Common myeloid progenitor, CD34-positive (primary cell): ENCODE measurements at regions of chr9 and their contacts with region 1.

Region 1: GRCh38 chr9:127586537-127586936 is 25.5 kb upstream of the STXBP1 start:
- DNase-seq: peak; percentile 63 to 74 (median 67)
- H3K4me3 ChIP-seq: no peak overlapping the region
- H3K27ac ChIP-seq: no peak overlapping the region
- H3K4me1 ChIP-seq: peaks cover 0 to 4% (median 1%) of the 10 kb centered on the region in 4 experiments
- H3K27me3 ChIP-seq: no peaks in the 10 kb centered on the region

Region 2: DNA sequence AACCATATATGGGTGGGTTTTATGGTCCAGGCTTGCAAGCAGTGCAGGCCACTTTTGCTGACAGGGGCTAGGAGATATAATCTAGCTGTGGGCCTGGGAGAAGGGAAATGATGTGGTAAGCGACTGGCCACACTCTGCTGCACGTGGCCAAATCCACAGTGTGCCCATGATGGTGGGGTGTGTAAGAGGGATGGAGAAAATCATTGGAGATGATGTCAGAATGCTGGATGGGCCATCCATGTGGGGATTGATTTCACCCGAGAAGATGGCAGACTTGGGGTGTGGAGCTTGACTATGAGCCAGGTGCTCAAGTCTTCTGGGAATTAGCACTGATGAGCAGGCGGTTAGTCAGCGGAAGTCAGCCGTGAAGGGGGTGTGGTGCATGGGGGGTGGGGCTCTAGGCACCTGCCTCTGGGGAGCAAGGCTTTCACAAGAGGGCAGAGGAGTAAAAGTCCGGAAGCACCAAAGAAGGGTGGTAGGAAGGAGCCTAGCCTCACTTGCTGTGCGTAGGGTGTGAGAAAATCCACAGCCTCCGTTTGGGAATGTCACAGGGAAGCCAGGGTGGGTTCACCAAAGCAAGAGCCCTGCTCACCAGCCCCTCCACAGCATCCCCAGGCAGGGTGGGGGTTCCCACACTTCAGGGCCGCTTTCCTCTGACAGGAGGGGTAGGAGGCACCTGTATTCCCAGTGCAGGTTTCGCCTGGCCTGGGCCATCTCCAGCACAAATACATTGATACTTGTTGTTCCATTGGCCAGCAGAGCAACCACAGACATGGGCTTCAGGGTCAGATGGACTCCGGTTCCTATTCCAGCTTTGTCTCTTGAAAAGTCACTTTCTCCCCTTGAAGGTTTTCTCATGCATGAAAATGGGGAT is 419.6 kb before region 1 on chr9:
- CTCF ChIA-PET with region 1: no interaction called
- POLR2A ChIA-PET with region 1: no interaction called
- DNase-seq: peak in 1 of 3 donors; percentile 11
- H3K4me3 ChIP-seq: no peak overlapping the region
- H3K27ac ChIP-seq: no peak overlapping the region
- H3K4me1 ChIP-seq: peaks cover 0 to 5% (median 0%) of the 10 kb centered on the region in 4 experiments
- H3K27me3 ChIP-seq: peaks cover 0 to 2% (median 0%) of the 10 kb centered on the region in 5 experiments

Region 3: GRCh38 chr9:127503947-127504782 is 82.4 kb before region 1 on chr9:
- CTCF ChIA-PET with region 1: interaction called, 139 read pairs
- POLR2A ChIA-PET with region 1: interaction called, 6 read pairs
- DNase-seq: peak; percentile 81 to 91 (median 87)
- H3K4me3 ChIP-seq: no peak overlapping the region
- H3K27ac ChIP-seq: no peak overlapping the region
- H3K4me1 ChIP-seq: no peaks in the 10 kb centered on the region
- H3K27me3 ChIP-seq: no peaks in the 10 kb centered on the region

Region 4: GRCh38 chr9:127519301-127520166 is 67.0 kb before region 1 on chr9:
- CTCF ChIA-PET with region 1: interaction called, 30 read pairs
- POLR2A ChIA-PET with region 1: no interaction called
- DNase-seq: peak; percentile 87 to 98 (median 98)
- H3K4me3 ChIP-seq: peak overlapping the region in 1 of 7 experiments; percentile 24
- H3K27ac ChIP-seq: no peak overlapping the region
- H3K4me1 ChIP-seq: peaks cover 0 to 15% (median 8%) of the 10 kb centered on the region in 4 experiments
- H3K27me3 ChIP-seq: no peaks in the 10 kb centered on the region

Region 5: GRCh38 chr9:127525401-127526187 is 60.9 kb before region 1 on chr9:
- CTCF ChIA-PET with region 1: interaction called, 30 read pairs
- POLR2A ChIA-PET with region 1: no interaction called
- DNase-seq: peak; percentile 14 to 51 (median 45)
- H3K4me3 ChIP-seq: no peak overlapping the region
- H3K27ac ChIP-seq: no peak overlapping the region
- H3K4me1 ChIP-seq: peaks cover 0 to 7% (median 3%) of the 10 kb centered on the region in 4 experiments
- H3K27me3 ChIP-seq: no peaks in the 10 kb centered on the region

Region 6: DNA sequence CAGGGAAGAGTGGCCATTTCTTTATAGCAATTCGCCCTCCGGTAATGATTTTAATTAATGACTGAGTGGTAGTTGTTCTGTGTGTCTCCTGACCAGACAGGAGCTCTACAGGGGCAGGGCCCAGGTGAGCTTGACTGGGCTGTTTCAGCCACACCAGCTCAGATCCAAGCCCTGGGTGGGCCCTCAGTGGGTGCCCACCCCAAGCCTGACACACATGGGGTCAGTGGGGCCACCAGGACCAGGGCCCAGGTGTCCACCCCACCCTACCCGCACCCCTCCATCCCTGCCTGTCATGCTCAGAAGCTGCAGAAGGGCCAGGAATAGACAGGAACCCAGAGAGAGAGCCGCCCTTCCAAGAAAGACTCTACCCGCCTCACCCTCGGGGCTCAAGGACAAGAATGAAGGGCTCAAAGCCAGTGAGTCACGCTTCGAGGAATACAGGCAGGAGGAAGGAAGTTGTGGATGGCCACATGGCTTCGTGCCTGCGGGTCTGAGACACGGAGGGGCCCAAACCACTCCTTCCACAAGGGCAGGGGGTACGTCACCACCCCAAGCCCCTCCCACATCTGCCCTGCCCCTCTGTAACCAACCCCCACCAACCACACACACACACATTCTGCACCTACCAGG is 30.7 kb before region 1 on chr9:
- CTCF ChIA-PET with region 1: interaction called, 29 read pairs
- POLR2A ChIA-PET with region 1: no interaction called
- DNase-seq: peak; percentile 95 to 98 (median 98)
- H3K4me3 ChIP-seq: peak overlapping the region in 3 of 7 experiments; percentile 26 to 50 (median 37)
- H3K27ac ChIP-seq: peak overlapping the region in 1 of 2 experiments; percentile 70
- H3K4me1 ChIP-seq: peaks cover 8 to 77% (median 44%) of the 10 kb centered on the region in 4 experiments
- H3K27me3 ChIP-seq: no peaks in the 10 kb centered on the region

Region 7: GRCh38 chr9:127644943-127645342 is 58.4 kb after region 1 on chr9:
- CTCF ChIA-PET with region 1: no interaction called
- POLR2A ChIA-PET with region 1: no interaction called
- DNase-seq: no peak
- H3K4me3 ChIP-seq: no peak overlapping the region
- H3K27ac ChIP-seq: no peak overlapping the region
- H3K4me1 ChIP-seq: no peaks in the 10 kb centered on the region
- H3K27me3 ChIP-seq: peaks cover 0 to 4% (median 0%) of the 10 kb centered on the region in 5 experiments

Region 8: DNA sequence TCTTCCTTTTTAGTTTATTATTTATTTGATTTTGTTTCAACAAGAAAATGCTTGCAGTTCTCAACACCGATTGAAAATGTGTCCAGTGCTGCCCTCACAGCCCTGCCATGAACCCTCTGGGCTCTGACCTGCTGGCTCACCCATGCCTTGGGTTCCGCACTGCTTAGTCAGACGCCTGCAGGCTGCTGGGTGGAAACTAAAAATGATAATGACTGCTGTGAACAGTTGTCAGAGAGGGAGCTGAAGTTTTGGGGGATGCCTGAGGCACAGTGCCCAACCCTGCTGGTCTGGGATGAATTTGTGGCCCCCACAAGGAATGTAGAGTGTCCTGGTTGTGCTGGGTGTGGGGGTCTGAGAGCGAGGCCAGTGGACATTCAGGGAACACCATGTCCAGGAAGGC is 98.0 kb after region 1 on chr9:
- CTCF ChIA-PET with region 1: no interaction called
- POLR2A ChIA-PET with region 1: no interaction called
- DNase-seq: no peak
- H3K4me3 ChIP-seq: no peak overlapping the region
- H3K27ac ChIP-seq: no peak overlapping the region
- H3K4me1 ChIP-seq: no peaks in the 10 kb centered on the region
- H3K27me3 ChIP-seq: no peaks in the 10 kb centered on the region

Region 9: GRCh38 chr9:127734747-127735529 is 148.4 kb after region 1 on chr9 and contains the start of gene TOR2A:
- CTCF ChIA-PET with region 1: interaction called, 14 read pairs
- POLR2A ChIA-PET with region 1: no interaction called
- DNase-seq: peak; percentile 98 to 99 (median 99)
- H3K4me3 ChIP-seq: peak within 1 kb of the TSS; percentile 53 to 87 (median 71)
- H3K27ac ChIP-seq: peak within 1 kb of the TSS; percentile 87 to 88
- H3K4me1 ChIP-seq: peaks cover 0 to 22% (median 15%) of the 10 kb centered on the region in 4 experiments
- H3K27me3 ChIP-seq: no peaks in the 10 kb centered on the region